Vagina (tissue), 2 donors: ENCODE measurements at regions of chr15 and their contacts with region 1.

Region 1: DNA sequence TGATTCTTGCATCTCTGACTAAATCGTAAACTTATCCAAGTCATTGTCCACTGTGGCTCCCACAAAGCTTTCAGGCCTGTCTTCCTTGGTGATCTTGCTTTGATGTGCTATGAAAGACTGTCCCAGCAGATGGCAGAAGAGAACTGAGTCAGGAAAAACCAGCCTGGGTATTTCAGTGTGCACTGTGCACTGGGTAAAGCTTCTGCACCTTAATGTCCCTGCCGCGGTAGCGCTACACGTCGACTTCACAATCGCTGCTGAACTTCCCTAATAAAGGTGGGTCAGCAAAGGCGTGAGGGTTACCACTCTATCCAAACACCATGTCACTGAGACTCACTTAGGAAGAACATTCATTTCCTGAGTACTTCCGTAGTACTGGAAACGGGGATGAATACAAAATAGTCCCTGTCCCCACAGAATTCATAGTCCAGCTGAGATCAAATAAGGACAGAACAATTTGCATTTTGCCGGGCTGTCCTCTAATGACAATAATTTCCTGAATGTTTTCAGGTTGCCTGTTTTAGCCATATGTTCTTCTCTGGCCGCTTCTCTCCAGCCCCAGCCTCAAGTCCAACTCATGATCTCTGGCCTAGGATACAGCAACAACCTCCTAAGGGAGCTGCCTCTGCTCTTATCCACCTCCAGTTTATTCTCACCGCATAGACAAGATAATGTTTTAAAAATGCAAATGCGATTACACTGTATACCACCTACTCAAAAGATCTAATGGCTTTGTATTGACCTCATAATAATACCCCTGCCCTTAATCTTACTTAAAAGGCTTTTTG is 83.6 kb upstream of the AKAP13 start:
- DNase-seq: peak in 1 of 2 donors; percentile 88
- H3K4me3 ChIP-seq: peak overlapping the region; percentile 16 to 26
- H3K27ac ChIP-seq: peak overlapping the region; percentile 70
- H3K4me1 ChIP-seq: no peaks in the 10 kb centered on the region
- H3K27me3 ChIP-seq: no peaks in the 10 kb centered on the region
- CTCF ChIP-seq: peak in 2 of 3 experiments; percentile 74 to 78
- POLR2A ChIP-seq: no peak

Region 2: GRCh38 chr15:85367741-85368140 is 70.9 kb after region 1 on chr15:
- intact Hi-C with region 1: no loop called
- DNase-seq: no peak
- H3K4me3 ChIP-seq: no peak overlapping the region
- H3K27ac ChIP-seq: no peak overlapping the region
- H3K4me1 ChIP-seq: no peaks in the 10 kb centered on the region
- H3K27me3 ChIP-seq: no peaks in the 10 kb centered on the region
- CTCF ChIP-seq: no peak
- POLR2A ChIP-seq: no peak

Region 3: DNA sequence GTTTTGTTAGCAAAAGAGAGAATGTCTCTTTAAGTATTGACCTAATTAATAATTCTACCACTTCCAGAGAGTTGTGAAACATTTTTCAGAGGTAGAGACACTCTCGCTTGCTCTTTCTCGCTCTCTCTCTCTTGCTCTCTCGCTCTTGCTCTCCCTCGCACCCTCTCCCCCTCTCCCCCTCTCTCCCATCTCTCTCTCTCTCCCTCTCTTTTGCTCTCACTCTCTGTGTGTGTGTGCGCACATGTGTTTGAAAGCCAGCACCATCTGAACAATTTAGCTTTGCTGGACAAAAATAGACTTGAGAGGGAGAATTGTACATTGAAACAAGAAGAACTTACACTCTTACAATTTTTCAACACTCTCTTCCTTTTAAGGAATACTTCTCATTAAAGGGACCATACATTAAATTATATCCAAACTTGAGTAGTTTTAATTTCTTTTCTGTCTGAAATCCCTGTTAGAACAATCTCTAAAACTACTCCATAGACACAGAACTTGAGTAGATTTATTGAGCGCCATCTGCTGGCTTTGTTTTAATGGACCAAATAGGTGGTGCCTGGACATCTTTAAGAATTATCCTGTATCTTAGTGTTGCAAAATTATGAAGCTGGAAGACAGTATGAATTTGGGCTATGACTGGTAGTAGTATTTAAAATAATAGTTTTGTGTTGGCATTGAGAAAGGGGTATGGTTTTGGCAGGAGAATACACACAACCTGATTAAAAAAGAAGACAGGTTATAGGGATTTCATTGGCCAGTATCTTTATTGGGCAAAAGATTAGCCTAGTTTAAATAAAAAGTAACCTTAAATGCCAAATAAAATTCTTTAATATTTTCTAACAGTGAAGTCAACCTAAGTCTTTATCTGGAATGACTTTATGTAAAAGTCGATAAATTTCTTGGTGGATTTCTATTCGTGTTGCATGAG is 208.2 kb after region 1 on chr15:
- intact Hi-C with region 1: loop called (anchors 10 kb)
- DNase-seq: no peak
- H3K4me3 ChIP-seq: no peak overlapping the region
- H3K27ac ChIP-seq: peak overlapping the region; percentile 47
- H3K4me1 ChIP-seq: peaks cover 22% of the 10 kb centered on the region
- H3K27me3 ChIP-seq: no peaks in the 10 kb centered on the region
- CTCF ChIP-seq: peak in 2 of 3 experiments; percentile 37 to 41
- POLR2A ChIP-seq: no peak

Region 4: GRCh38 chr15:85831415-85832113 is 534.8 kb after region 1 on chr15:
- intact Hi-C with region 1: loop called (anchors 10 kb)
- DNase-seq: no peak
- H3K4me3 ChIP-seq: no peak overlapping the region
- H3K27ac ChIP-seq: no peak overlapping the region
- H3K4me1 ChIP-seq: no peaks in the 10 kb centered on the region
- H3K27me3 ChIP-seq: no peaks in the 10 kb centered on the region
- CTCF ChIP-seq: peak; percentile 12 to 60 (median 47)
- POLR2A ChIP-seq: no peak